H1 (cell line): ENCODE measurements at regions of chr3 and their contacts with region 1.

Region 1: DNA sequence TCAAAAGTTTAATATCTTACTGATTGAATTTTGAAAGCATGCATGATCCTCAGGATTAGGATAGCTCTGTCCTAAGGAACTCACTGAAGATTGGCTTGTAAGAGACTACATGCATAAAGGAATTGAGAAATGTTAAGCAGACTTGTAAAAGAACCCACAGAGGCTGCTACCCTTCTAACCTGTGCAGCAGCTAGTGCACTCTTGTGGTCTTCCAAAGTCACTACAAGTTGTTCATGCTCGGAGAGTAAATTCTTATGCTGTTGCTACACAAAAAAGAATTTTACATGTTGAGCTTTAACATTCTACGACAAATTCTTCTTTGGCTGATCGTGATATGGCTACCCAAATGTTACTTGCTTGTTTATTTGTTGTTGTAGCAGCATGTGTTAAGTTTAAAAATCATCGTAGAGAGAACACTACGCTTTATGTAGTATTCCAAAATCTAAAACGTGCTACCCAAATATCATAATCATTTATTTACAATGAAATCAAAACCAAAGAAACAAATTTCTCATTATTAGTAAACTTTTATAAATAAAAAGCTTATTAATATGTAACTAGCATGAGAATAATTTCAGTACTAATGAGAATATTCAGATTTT is 55.0 kb downstream of the GOLIM4 start:
- DNase-seq: no peak
- H3K4me3 ChIP-seq: no peak overlapping the region
- H3K27ac ChIP-seq: no peak overlapping the region
- H3K4me1 ChIP-seq: no peaks in the 10 kb centered on the region
- H3K27me3 ChIP-seq: no peaks in the 10 kb centered on the region
- CTCF ChIP-seq: peak in 2 of 3 experiments; percentile 78; a peak in 3 of 4 replicates
- EP300 ChIP-seq: no peak
- POLR2A ChIP-seq: no peak
- RAD21 ChIP-seq: peak; percentile 82 to 89

Region 2: DNA sequence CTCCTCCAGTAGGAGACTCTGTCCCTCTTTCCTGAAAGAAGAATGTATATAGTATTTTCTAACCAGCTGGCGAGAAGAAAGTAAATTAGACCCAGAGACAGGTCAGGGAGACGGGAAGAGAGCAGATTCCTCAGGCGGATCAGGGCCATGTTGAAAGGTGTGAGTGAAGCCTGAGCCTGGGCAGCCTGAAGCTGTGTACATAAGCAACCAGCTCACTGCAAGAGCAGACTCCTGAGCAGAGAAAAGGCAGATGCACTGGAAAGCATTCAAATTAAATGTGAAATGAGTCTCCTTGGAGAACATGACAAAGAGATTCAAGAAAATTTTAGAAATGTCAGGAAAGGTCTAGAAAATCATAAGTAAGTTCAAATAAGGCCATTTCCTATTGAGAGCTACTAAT is 110.7 kb before region 1 on chr3:
- CTCF ChIA-PET with region 1: interaction called, 135 read pairs
- POLR2A ChIA-PET with region 1: no interaction called
- DNase-seq: no peak
- H3K4me3 ChIP-seq: no peak overlapping the region
- H3K27ac ChIP-seq: no peak overlapping the region
- H3K4me1 ChIP-seq: no peaks in the 10 kb centered on the region
- H3K27me3 ChIP-seq: no peaks in the 10 kb centered on the region
- CTCF ChIP-seq: no peak
- EP300 ChIP-seq: no peak
- POLR2A ChIP-seq: no peak
- RAD21 ChIP-seq: no peak

Region 3: DNA sequence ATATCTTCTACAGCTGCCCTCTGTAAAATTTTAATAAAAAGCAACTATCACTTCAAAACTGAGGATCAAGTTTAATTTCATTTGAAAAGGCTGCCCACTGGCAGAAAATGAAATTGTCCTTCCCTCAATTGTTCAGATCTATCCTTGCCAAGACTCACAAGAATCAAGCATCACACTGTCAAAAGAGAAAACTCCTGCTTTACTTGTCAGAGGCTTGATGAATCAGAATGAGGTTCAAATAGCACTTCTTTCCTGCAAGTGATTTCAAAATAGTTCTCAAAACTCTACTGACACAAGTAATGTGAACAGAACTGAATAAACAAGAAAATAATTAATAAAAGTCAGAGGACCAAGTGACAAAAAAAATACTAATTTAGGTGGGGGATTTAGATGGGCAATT is 15.6 kb before region 1 on chr3:
- CTCF ChIA-PET with region 1: interaction called, 33 read pairs
- POLR2A ChIA-PET with region 1: no interaction called
- DNase-seq: no peak
- H3K4me3 ChIP-seq: no peak overlapping the region
- H3K27ac ChIP-seq: no peak overlapping the region
- H3K4me1 ChIP-seq: 0 out of 7 replicates have a peak, but pooled peaks cover 0 to 3% (median 0%) of the 10 kb centered on the region in 4 experiments
- H3K27me3 ChIP-seq: no peaks in the 10 kb centered on the region
- CTCF ChIP-seq: no peak
- EP300 ChIP-seq: no peak
- POLR2A ChIP-seq: no peak
- RAD21 ChIP-seq: no peak

Region 4: GRCh38 chr3:168030577-168030976 is 10.1 kb before region 1 on chr3:
- CTCF ChIA-PET with region 1: interaction called, 33 read pairs
- POLR2A ChIA-PET with region 1: no interaction called
- DNase-seq: no peak
- H3K4me3 ChIP-seq: no peak overlapping the region
- H3K27ac ChIP-seq: no peak overlapping the region
- H3K4me1 ChIP-seq: 0 out of 7 replicates have a peak, but pooled peaks cover 0 to 3% (median 0%) of the 10 kb centered on the region in 4 experiments
- H3K27me3 ChIP-seq: no peaks in the 10 kb centered on the region
- CTCF ChIP-seq: no peak
- EP300 ChIP-seq: no peak
- POLR2A ChIP-seq: no peak
- RAD21 ChIP-seq: no peak

Region 5: DNA sequence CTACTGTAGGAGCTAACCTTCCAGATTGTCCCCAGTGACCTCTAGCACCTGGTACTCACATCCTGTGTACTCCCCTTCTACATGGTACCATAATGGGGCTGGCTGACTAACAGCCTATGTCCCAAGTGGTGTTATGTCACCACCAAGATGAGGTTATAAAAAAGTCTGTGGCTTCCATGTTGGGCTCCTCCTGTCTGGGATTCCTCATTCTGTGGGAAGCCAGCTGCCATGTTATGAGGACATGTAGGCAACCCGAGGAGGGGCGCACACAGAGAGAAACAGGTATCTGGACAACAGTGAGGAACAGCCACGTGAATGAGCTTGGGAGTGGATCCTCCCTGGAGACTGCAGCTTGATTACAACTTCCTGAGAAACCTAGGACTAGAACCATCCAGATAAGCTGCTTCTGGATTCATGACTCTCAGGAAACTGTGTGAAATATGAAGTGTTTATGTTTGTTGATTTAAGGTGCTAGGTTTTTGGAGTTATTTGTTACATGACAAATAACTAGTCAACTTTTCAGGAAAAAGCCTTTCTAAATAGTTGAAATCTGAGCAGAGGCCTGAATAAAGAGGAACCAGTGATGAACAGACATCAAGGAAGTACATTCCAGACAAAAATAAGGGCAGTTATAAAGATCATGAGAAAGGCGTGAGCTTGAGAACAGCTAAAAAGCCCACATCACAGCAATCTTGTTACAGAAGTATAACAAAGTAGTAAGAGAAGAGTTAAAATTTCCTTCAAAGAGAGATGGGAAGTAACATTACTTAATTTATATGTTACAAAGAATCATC is 33.3 kb after region 1 on chr3:
- CTCF ChIA-PET with region 1: no interaction called
- POLR2A ChIA-PET with region 1: no interaction called
- DNase-seq: no peak
- H3K4me3 ChIP-seq: no peak overlapping the region
- H3K27ac ChIP-seq: no peak overlapping the region
- H3K4me1 ChIP-seq: peaks cover 2 to 5% (median 4%) of the 10 kb centered on the region in 4 experiments; a peak in 4 of 7 replicates
- H3K27me3 ChIP-seq: no peaks in the 10 kb centered on the region
- CTCF ChIP-seq: no peak
- EP300 ChIP-seq: no peak
- POLR2A ChIP-seq: no peak
- RAD21 ChIP-seq: no peak

Region 6: GRCh38 chr3:168088106-168088720 is 47.5 kb after region 1 on chr3:
- CTCF ChIA-PET with region 1: interaction called, 16 read pairs
- POLR2A ChIA-PET with region 1: no interaction called
- DNase-seq: no peak
- H3K4me3 ChIP-seq: no peak overlapping the region
- H3K27ac ChIP-seq: no peak overlapping the region
- H3K4me1 ChIP-seq: peaks cover 0 to 3% (median 3%) of the 10 kb centered on the region in 4 experiments; a peak in 3 of 7 replicates
- H3K27me3 ChIP-seq: no peaks in the 10 kb centered on the region
- CTCF ChIP-seq: peak; percentile 40 to 69 (median 51)
- EP300 ChIP-seq: no peak
- POLR2A ChIP-seq: no peak
- RAD21 ChIP-seq: peak; percentile 10 to 37; a peak in 2 of 4 replicates

Region 7: DNA sequence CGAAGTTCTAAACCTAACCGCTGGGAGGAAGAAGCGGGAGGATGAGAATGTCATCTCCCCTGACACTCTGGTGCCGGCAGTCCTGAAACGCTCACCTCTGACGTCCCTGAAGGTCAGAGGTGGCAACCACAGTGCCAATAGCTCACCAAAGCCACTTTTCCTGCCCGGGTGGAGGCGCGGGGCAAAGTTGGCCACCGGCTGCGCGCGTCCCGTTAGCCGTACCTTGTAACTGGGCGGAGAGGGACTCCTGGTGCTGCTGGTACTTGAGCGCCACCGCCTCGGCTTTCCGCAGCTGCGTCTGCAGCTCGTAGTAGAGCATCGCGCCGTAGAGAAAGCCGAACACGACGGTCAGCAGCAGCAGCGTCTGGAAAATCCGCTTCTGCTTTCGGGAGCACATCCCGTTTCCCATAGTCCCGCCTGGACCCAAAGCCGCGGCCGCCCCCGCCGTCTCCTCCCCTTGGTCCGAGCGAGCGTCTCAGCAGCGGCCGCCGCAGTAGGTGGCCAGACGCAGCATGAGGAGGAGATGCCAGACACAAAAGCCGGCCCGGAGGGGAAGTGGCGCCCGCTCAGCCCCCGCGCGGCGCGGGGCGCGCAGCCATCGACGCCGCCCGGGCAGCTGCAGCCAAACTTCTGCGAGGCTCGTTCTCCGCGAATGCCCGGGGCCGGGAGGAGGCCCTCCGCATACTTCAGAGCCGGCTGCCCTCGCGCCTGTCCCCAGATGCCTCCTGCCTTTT is 54.3 kb after region 1 on chr3:
- CTCF ChIA-PET with region 1: interaction called, 10 read pairs
- POLR2A ChIA-PET with region 1: no interaction called
- DNase-seq: peak in 1 of 2 experiments; percentile 68
- H3K4me3 ChIP-seq: peak overlapping the region; percentile 78 to 99 (median 86)
- H3K27ac ChIP-seq: 0 out of 2 replicates have a peak overlapping the region, but pooled peaks have one; percentile 31
- H3K4me1 ChIP-seq: peaks cover 0 to 7% (median 1%) of the 10 kb centered on the region in 4 experiments; a peak in 4 of 7 replicates
- H3K27me3 ChIP-seq: no peaks in the 10 kb centered on the region
- CTCF ChIP-seq: peak in 1 of 3 experiments; percentile 28; a peak in 1 of 4 replicates
- EP300 ChIP-seq: no peak
- POLR2A ChIP-seq: peak in 1 of 2 experiments; percentile 27; a peak in 2 of 3 replicates
- RAD21 ChIP-seq: no peak